IMR-90 (cell line): ENCODE measurements at regions of chr1 and their contacts with region 1.

Region 1: GRCh38 chr1:174999216-174999925 is 376 bp upstream of the CACYBP start:
- DNase-seq: peak; percentile 99
- ATAC-seq: peak; percentile 87
- H3K4me3 ChIP-seq: peak overlapping the region; percentile 96
- H3K27ac ChIP-seq: peak overlapping the region; percentile 91
- H3K4me1 ChIP-seq: peaks cover 2% of the 10 kb centered on the region; the same call in 1 of the 2 replicates
- H3K27me3 ChIP-seq: no peaks in the 10 kb centered on the region
- CTCF ChIP-seq: no peak
- POLR2A ChIP-seq: peak; percentile 97
- RAD21 ChIP-seq: no peak

Region 2: DNA sequence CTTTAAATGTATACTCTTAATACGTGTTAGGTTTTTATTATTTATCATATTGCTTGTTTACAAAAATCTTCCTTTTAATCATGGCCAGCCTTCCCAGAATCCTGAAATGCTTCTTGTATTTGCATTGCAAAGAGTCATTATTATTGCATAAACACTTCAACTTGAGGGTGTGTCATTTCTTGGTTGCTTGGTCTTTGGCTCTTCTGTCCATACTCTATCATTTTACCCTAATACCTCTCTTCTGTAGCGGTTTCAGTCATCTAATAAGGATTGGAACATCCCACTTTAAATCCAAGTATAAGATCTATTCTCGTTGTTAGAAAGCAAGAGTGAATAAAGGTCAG is 200.3 kb before region 1 on chr1:
- CTCF ChIA-PET with region 1: no interaction called
- POLR2A ChIA-PET with region 1: no interaction called
- dilution Hi-C with region 1: no loop called
- in situ Hi-C with region 1: no loop called
- intact Hi-C with region 1: loop called (anchors 5 kb)
- DNase-seq: no peak
- ATAC-seq: peak; percentile 25; the same call in 1 of the 2 replicates
- H3K4me3 ChIP-seq: no peak overlapping the region
- H3K27ac ChIP-seq: no peak overlapping the region
- H3K4me1 ChIP-seq: 0 out of 2 replicates have a peak, but pooled peaks cover 2% of the 10 kb centered on the region
- H3K27me3 ChIP-seq: peaks cover 2% of the 10 kb centered on the region; the same call in 1 of the 2 replicates
- CTCF ChIP-seq: no peak
- POLR2A ChIP-seq: no peak
- RAD21 ChIP-seq: no peak